SK-N-SH (cell line): ENCODE measurements at regions of chr3 and their contacts with region 1.

Region 1: DNA sequence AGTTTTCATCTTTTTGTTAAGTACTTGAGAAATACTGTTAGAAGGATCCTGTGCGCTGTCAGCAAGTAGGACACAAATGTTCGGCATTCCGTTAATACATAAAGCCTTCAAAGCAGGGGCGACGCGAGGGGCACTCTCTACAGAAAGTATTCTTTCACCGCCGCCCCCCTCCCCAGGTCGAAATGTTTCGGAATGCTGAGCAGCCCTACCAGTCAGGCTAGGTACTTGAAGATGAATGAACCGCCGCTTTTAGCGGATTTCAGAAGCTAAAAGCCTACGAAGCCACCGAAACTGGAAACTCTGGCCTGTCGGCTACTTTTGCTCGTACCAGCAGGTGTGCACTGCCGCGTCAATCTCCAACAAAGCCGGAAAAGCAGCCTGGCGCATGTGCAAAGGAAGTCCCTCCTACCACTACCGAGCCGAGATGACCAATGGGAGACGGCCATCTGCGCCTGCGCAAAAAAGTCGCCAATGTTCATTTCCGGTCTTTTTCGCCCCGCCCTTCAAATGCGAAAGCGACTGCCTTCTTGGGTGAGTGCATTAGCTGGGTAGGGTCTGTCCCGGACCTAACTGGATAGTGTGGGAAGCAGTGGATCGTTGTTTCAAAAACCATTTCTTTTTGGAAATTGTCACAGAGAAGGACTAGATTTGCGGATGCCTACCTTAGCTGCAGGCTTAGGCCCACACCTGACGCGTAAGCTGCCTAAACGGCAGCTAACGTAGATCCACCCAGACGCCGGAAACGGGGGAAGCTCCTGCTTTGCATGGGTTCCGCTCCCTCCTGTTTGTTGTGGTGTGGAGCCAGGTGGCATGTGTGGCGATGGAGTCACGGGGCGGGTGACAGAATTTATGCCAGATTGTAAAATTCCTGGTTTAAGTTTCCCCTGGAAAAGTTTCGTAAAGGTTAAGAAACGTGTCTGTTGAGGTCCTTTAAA is at the start of gene WDR5B:
- DNase-seq: peak; percentile 93
- H3K4me3 ChIP-seq: peak within 1 kb of the TSS; percentile 74 to 95
- H3K27ac ChIP-seq: peak within 1 kb of the TSS; percentile 90 to 97
- H3K4me1 ChIP-seq: peaks cover 7 to 8% of the 10 kb centered on the region in 2 experiments
- H3K27me3 ChIP-seq: no peaks in the 10 kb centered on the region
- CTCF ChIP-seq: no peak
- EP300 ChIP-seq: peak in 1 of 2 experiments; percentile 16; a peak in 1 of 4 replicates
- RAD21 ChIP-seq: no peak
- polyA plus RNA-seq, gene WDR5B: 2.2 and 3.5 TPM in 2 replicates

Region 2: DNA sequence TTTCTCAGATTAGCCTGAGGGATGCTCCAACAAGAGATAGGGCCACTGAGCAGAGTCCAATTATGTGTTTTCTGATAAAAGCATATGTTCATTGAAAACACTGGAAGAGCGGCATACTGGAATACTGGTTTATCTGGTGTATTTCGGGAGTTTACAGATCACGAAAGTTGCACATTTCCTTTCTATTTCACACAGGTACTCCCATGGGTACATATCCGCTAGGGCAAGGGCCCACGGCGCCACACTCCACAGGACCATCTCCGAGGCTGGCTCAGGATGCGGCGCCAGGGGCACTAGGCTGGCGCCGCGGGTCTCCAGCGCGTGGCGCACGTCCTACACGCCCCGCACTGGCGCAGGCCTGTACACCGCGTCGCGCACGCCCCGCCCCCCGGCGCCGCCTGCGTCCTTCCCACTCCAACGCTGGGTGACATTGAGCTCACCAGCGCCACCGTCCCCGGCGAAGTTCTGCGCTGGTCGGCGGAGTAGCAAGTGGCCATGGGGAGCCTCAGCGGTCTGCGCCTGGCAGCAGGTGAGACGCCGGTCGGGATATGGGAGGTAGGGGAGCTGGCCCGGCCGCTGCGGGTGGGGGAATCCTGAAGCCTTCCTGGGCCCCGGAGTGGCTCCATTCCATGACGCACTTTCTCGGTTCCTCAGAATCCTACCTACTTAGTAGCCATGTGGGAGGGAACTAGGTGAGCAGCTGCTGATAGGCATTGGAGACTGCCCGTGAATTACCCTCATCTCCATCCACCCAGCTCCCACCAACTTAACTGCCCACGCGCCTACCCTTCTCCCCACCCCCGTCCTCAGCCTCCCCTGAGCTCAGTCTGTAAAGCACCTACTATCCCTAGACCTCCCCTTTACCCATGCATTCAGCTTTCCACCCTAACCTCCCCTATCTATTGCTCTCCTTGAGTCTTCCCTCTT is 32.0 kb before region 1 on chr3 and contains the start of gene FAM162A:
- CTCF ChIA-PET with region 1: interaction called, 8 read pairs
- POLR2A ChIA-PET with region 1: interaction called, 21 read pairs
- DNase-seq: peak; percentile 93
- H3K4me3 ChIP-seq: peak within 1 kb of the TSS; percentile 79 to 98
- H3K27ac ChIP-seq: peak within 1 kb of the TSS; percentile 61 to 94
- H3K4me1 ChIP-seq: peaks cover 8 to 9% of the 10 kb centered on the region in 2 experiments; a peak in 3 of 4 replicates
- H3K27me3 ChIP-seq: no peaks in the 10 kb centered on the region
- CTCF ChIP-seq: peak; percentile 62
- EP300 ChIP-seq: no peak; a peak in 1 of 4 replicates
- RAD21 ChIP-seq: peak; percentile 19; the same call in 1 of the 2 replicates
- polyA plus RNA-seq, gene FAM162A: 35.1 and 35.3 TPM in 2 replicates

Region 3: DNA sequence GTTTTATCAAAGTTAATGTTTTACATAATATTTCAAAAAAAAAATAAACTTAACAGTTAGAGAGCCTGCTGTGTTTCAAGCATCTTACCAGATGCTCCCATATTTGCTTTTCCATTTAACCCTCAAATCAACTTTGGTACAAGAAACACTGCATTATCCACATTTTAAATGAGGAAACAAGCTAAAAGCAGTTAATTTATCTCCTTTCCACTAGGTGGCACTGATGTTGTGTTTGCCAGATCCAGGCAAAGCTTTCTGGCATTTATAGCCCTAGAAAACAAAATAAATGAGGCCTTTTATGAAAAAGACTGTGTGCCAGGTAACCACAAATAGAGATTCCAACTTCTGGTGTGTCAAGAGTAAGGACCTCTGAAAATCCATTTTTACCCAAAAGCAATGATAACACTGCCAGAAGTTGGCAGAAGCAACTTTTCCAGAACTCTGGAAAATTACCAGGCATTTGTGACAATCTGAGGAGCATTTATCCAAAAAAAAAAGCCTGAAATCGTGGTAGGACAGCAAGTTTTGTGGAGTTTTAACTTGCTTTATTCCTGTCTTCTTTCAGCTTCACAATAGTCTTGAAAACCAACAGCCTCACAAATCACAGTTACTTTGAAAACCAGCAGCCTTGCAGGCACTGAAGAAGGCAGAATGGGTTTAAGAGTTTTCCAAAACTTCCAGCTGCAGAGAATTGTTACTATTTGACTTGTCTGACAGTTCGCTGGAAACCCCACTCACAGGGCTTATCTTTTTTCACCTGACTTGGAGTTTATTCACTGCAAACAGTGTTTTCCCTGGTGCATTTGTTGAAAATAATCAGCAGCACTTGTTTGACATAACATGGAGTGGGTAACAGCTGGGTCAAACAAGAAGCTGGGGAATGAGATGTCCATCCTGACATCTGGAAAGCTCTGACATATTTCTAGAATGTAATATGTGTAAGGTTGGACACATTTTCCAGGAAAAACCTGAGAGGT is 22.8 kb before region 1 on chr3:
- CTCF ChIA-PET with region 1: interaction called, 18 read pairs
- POLR2A ChIA-PET with region 1: interaction called, 3 read pairs
- DNase-seq: peak; percentile 33
- H3K4me3 ChIP-seq: no peak overlapping the region
- H3K27ac ChIP-seq: no peak overlapping the region; a peak in 1 of 4 replicates
- H3K4me1 ChIP-seq: peaks cover 2 to 19% of the 10 kb centered on the region in 2 experiments; a peak in 3 of 4 replicates
- H3K27me3 ChIP-seq: no peaks in the 10 kb centered on the region
- CTCF ChIP-seq: peak; percentile 85
- EP300 ChIP-seq: no peak
- RAD21 ChIP-seq: peak; percentile 83

Region 4: DNA sequence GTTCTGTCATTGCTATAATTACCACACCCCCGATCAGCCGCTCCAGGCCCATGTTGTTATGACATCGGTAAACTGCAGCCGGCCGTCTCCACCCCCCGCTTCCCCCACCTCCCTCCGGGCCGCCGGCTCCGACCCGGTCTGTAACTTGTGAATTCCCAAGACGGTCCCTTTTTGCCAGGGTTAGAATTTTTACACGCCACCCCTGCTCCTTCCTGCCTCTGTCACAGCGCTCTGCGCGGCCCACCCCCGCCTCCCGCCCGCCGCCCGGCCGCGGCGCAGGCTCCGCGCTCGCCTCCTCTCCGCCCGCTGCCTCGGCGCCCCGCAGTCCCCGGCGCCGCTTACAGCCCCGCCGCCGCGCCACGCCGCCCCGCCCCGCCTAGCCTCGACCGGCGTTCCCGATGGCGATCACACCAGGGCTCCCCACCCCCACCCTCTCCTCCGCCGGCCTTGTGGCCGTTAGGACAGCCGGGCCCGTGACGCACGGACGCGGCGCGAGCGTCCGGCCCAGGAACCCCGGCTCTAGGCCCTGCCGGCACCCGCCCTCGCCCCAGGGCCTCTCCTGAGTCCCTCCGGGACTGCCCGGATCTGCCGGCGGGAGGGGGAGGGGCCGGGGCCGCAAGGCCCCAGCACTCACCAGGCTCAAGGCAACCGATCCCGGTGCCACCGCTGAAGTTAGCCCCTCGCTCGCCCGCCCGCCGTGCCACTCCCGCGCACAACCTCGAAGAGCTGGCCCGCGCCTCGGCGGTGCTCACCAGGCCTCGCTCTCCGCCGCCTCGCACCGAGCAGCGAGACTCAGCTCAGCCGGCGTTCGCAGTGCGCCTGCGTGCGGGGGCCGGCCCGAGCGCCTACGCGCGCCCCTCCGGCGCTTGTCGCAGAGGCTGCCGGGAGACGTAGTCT is 98.4 kb after region 1 on chr3 and contains the start of gene KPNA1:
- CTCF ChIA-PET with region 1: no interaction called
- POLR2A ChIA-PET with region 1: interaction called, 11 read pairs
- DNase-seq: peak; percentile 96
- H3K4me3 ChIP-seq: peak within 1 kb of the TSS; percentile 80 to 86
- H3K27ac ChIP-seq: peak within 1 kb of the TSS; percentile 87 to 94
- H3K4me1 ChIP-seq: peaks cover 0 to 21% of the 10 kb centered on the region in 2 experiments; a peak in 3 of 4 replicates
- H3K27me3 ChIP-seq: no peaks in the 10 kb centered on the region
- CTCF ChIP-seq: no peak
- EP300 ChIP-seq: no peak
- RAD21 ChIP-seq: no peak
- polyA plus RNA-seq, gene KPNA1: 21.6 and 32.0 TPM in 2 replicates